Dorsolateral prefrontal cortex (tissue), 120 donors: ENCODE measurements at regions of chr5 and their contacts with region 1.

Region 1: GRCh38 chr5:93620487-93621326 is 37.7 kb downstream of the NR2F1 start:
- DNase-seq: peak; percentile 57 to 86 (median 76)
- H3K4me3 ChIP-seq: peak overlapping the region; percentile 59 to 90 (median 76)
- H3K27ac ChIP-seq: peak overlapping the region in 58 of 59 donors; percentile 66 to 95 (median 88)
- H3K27me3 ChIP-seq: no peaks in the 10 kb centered on the region
- CTCF ChIP-seq: peak in 41 of 56 donors; percentile 7 to 53 (median 31)

Region 2: GRCh38 chr5:93589829-93590215 is 30.9 kb before region 1 on chr5:
- intact Hi-C with region 1: no loop called
- DNase-seq: peak in 2 of 10 donors; percentile 40 to 73
- H3K4me3 ChIP-seq: peak overlapping the region in 55 of 59 donors; percentile 2 to 86 (median 67)
- H3K27ac ChIP-seq: peak overlapping the region in 54 of 59 donors; percentile 8 to 95 (median 82)
- H3K27me3 ChIP-seq: peaks cover 0 to 7% (median 0%) of the 10 kb centered on the region in 45 donors
- CTCF ChIP-seq: peak in 3 of 56 donors; percentile 15 to 16 (median 15)

Region 3: DNA sequence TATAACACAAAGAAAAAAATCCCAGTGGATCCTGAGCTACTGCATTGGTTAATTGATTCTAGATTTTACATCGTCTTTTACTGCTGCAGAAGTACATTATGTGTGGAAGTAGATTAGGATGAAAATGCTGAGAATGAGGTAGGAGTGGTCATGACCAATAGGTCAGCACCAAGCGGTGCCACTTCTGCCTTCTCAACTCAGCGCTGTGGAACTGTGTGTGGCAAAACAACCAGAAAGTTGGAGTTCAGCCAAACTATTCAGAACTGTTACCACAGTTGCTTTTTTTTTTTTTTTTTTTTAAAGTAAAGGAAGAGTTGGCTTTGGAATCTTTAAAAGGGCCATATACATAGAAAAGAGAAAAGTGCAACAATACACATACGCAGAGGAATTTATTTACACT is 96.5 kb after region 1 on chr5:
- intact Hi-C with region 1: loop called in 1 of 2 experiments (anchors 10 kb)
- DNase-seq: no peak
- H3K4me3 ChIP-seq: no peak overlapping the region
- H3K27ac ChIP-seq: no peak overlapping the region
- H3K27me3 ChIP-seq: no peaks in the 10 kb centered on the region
- CTCF ChIP-seq: no peak